Naive thymus-derived CD4-positive, alpha-beta T cell (primary cell): ENCODE measurements at regions of chr14 and their contacts with region 1.

Region 1: DNA sequence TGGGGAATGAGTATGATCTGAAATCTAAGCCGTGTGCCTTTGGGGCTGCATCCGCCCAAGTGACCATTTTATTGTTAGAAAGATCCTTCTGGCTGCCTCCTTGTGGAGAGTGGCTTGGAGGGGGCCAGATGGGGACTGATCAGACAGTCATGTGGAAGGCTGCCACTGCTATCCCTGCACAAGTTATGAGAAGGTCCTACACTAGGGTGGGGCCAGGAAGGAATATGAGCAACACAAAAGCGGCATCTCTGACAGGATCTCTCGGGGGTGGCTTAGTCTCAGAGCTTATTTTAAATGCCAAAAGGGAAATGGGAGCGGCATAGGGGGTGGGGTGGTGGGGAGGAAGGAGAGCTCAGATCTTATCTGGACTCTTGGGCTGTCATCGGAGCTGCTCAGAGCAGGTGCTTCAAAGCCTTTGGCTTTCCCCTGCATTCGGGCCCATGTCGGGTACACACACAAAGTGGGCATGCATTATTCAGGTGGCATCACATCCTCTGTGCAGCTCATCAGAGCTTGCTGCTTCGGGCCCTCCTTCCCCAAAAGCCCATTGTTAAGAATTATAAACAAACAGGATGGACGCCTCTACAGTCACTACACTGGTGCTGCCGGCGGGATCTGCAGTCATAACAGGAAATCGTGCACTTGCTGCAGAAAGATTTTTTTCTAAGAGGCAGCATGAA is 805.4 kb downstream of the VRK1 start:
- DNase-seq: peak; percentile 39 to 92 (median 89)
- ATAC-seq: peak; percentile 94
- H3K4me3 ChIP-seq: peak overlapping the region; percentile 37
- H3K4me3 Mint-ChIP-seq: no peak overlapping the region
- H3K27ac ChIP-seq: peak overlapping the region; percentile 80
- H3K27ac Mint-ChIP-seq: no peak overlapping the region
- H3K4me1 ChIP-seq: peaks cover 57 to 64% of the 10 kb centered on the region in 2 donors
- H3K4me1 Mint-ChIP-seq: peaks cover 0 to 31% (median 4%) of the 10 kb centered on the region in 7 donors
- H3K27me3 ChIP-seq: no peaks in the 10 kb centered on the region
- H3K27me3 Mint-ChIP-seq: no peaks in the 10 kb centered on the region

Region 2: GRCh38 chr14:96962337-96962736 is 640.2 kb before region 1 on chr14:
- CTCF ChIA-PET with region 1: no interaction called
- POLR2A ChIA-PET with region 1: no interaction called
- intact Hi-C with region 1: loop called in 1 of 2 experiments (anchors 2 kb)
- DNase-seq: peak in 7 of 9 donors; percentile 27 to 75 (median 59)
- ATAC-seq: peak; percentile 76
- H3K4me3 ChIP-seq: peak overlapping the region; percentile 14
- H3K4me3 Mint-ChIP-seq: peak overlapping the region; percentile 37 to 81 (median 76)
- H3K27ac ChIP-seq: peak overlapping the region; percentile 61
- H3K27ac Mint-ChIP-seq: peak overlapping the region; percentile 78 to 99 (median 94)
- H3K4me1 ChIP-seq: peaks cover 39 to 62% of the 10 kb centered on the region in 2 donors
- H3K4me1 Mint-ChIP-seq: peaks cover 17 to 76% (median 63%) of the 10 kb centered on the region in 7 donors
- H3K27me3 ChIP-seq: no peaks in the 10 kb centered on the region
- H3K27me3 Mint-ChIP-seq: no peaks in the 10 kb centered on the region

Region 3: GRCh38 chr14:97299661-97300060 is 302.9 kb before region 1 on chr14:
- CTCF ChIA-PET with region 1: no interaction called
- POLR2A ChIA-PET with region 1: no interaction called
- intact Hi-C with region 1: loop called in 1 of 2 experiments (anchors 1 kb)
- DNase-seq: peak in 5 of 9 donors; percentile 16 to 31 (median 22)
- ATAC-seq: peak; percentile 54
- H3K4me3 ChIP-seq: no peak overlapping the region
- H3K4me3 Mint-ChIP-seq: no peak overlapping the region
- H3K27ac ChIP-seq: no peak overlapping the region
- H3K27ac Mint-ChIP-seq: peak overlapping the region in 2 of 9 donors; percentile 28 to 48
- H3K4me1 ChIP-seq: peaks cover 0 to 4% of the 10 kb centered on the region in 2 donors
- H3K4me1 Mint-ChIP-seq: peaks cover 4 to 23% (median 12%) of the 10 kb centered on the region in 7 donors
- H3K27me3 ChIP-seq: no peaks in the 10 kb centered on the region
- H3K27me3 Mint-ChIP-seq: peaks cover 0 to 30% (median 0%) of the 10 kb centered on the region in 5 donors

Region 4: GRCh38 chr14:97620066-97620465 is 17.5 kb after region 1 on chr14:
- CTCF ChIA-PET with region 1: interaction called, 4 read pairs
- POLR2A ChIA-PET with region 1: interaction called, 62 read pairs
- intact Hi-C with region 1: loop called (anchors 1 kb)
- DNase-seq: peak in 1 of 9 donors; percentile 15
- ATAC-seq: no peak
- H3K4me3 ChIP-seq: peak overlapping the region; percentile 4
- H3K4me3 Mint-ChIP-seq: peak overlapping the region; percentile 72 to 95 (median 85)
- H3K27ac ChIP-seq: peak overlapping the region; percentile 76
- H3K27ac Mint-ChIP-seq: peak overlapping the region; percentile 95 to 100 (median 98)
- H3K4me1 ChIP-seq: peaks cover 37 to 38% of the 10 kb centered on the region in 2 donors
- H3K4me1 Mint-ChIP-seq: peaks cover 33 to 74% (median 58%) of the 10 kb centered on the region in 7 donors
- H3K27me3 ChIP-seq: no peaks in the 10 kb centered on the region
- H3K27me3 Mint-ChIP-seq: no peaks in the 10 kb centered on the region

Region 5: DNA sequence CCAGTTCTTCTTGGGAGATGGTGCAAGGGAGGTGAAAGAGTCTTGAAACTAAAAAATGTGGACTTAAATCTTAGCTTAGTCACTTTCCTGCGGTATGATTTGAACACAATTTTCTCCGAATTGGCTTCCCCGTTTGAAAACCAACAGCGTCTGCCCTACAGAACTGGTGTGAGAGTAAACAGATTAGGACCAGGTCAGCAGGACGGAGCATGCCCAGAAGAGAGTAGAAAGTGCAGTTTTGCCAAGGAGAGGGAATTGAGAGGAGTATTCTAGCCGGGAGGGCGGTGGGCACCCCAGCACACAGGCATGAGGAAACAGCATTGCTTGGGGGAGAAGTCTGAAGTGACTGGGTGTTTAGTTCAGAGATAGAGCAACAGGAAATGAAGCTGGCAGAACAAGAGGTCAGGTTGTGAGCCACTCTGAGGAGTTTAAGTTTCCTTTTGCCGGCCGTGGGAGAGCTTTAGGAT is 121.7 kb after region 1 on chr14:
- CTCF ChIA-PET with region 1: interaction called, 3 read pairs
- POLR2A ChIA-PET with region 1: interaction called, 14 read pairs
- intact Hi-C with region 1: loop called in 1 of 2 experiments (anchors 2 kb)
- DNase-seq: peak in 8 of 9 donors; percentile 38 to 67 (median 59)
- ATAC-seq: peak; percentile 77
- H3K4me3 ChIP-seq: peak overlapping the region; percentile 57
- H3K4me3 Mint-ChIP-seq: peak overlapping the region; percentile 78 to 92 (median 84)
- H3K27ac ChIP-seq: peak overlapping the region; percentile 80
- H3K27ac Mint-ChIP-seq: peak overlapping the region; percentile 92 to 99 (median 97)
- H3K4me1 ChIP-seq: peaks cover 28 to 72% of the 10 kb centered on the region in 2 donors
- H3K4me1 Mint-ChIP-seq: peaks cover 51 to 94% (median 86%) of the 10 kb centered on the region in 7 donors
- H3K27me3 ChIP-seq: no peaks in the 10 kb centered on the region
- H3K27me3 Mint-ChIP-seq: no peaks in the 10 kb centered on the region

Region 6: GRCh38 chr14:98433436-98433835 is 830.9 kb after region 1 on chr14:
- CTCF ChIA-PET with region 1: no interaction called
- POLR2A ChIA-PET with region 1: no interaction called
- intact Hi-C with region 1: no loop called
- DNase-seq: no peak
- ATAC-seq: no peak
- H3K4me3 ChIP-seq: no peak overlapping the region
- H3K4me3 Mint-ChIP-seq: peak overlapping the region in 6 of 10 donors; percentile 9 to 71 (median 59)
- H3K27ac ChIP-seq: no peak overlapping the region
- H3K27ac Mint-ChIP-seq: peak overlapping the region in 8 of 9 donors; percentile 20 to 79 (median 56)
- H3K4me1 ChIP-seq: no peaks in the 10 kb centered on the region
- H3K4me1 Mint-ChIP-seq: peaks cover 9 to 40% (median 26%) of the 10 kb centered on the region in 7 donors
- H3K27me3 ChIP-seq: no peaks in the 10 kb centered on the region
- H3K27me3 Mint-ChIP-seq: no peaks in the 10 kb centered on the region

Region 7: DNA sequence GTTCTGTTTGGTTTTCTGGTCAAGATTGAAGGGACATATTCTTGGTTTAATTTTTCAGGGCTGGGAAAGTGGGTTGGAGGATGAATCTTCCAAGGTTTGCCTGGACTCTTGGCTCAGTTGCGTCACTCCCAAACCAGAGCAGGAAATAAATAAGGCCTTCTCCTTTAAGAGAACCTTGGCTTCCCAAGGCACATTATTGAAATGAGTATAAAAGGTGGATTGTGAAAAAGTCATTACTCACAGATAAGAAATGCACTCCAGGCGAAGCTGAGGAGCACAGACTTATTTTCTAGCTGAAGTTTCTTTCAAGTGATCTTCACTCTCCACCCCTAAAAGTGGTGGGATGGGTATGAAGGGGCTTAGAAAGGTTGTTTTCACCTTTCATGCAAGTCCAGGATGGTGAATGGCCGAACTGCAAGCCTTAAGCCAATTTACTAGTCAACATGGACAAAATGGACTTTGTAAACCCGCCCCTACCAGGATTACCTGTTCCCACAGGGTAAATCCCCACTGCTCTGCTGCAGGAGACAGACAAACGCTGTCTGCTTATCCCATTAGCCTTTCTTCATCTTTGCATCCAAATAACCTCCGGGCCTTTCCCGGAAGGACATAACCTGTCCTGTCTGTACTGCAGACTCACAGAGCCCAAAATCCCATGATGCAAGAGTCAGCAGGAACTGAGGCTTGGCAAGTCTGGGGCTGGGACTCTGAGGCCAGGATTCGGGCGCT is 1461.8 kb after region 1 on chr14:
- CTCF ChIA-PET with region 1: no interaction called
- POLR2A ChIA-PET with region 1: no interaction called
- intact Hi-C with region 1: no loop called
- DNase-seq: no peak
- ATAC-seq: no peak
- H3K4me3 ChIP-seq: no peak overlapping the region
- H3K4me3 Mint-ChIP-seq: no peak overlapping the region
- H3K27ac ChIP-seq: no peak overlapping the region
- H3K27ac Mint-ChIP-seq: peak overlapping the region in 2 of 9 donors; percentile 54 to 60
- H3K4me1 ChIP-seq: no peaks in the 10 kb centered on the region
- H3K4me1 Mint-ChIP-seq: peaks cover 0 to 12% (median 0%) of the 10 kb centered on the region in 7 donors
- H3K27me3 ChIP-seq: no peaks in the 10 kb centered on the region
- H3K27me3 Mint-ChIP-seq: peaks cover 0 to 2% (median 0%) of the 10 kb centered on the region in 5 donors

Region 8: GRCh38 chr14:99192028-99192621 is 1589.5 kb after region 1 on chr14:
- CTCF ChIA-PET with region 1: no interaction called
- POLR2A ChIA-PET with region 1: interaction called, 4 read pairs
- intact Hi-C with region 1: loop called in 1 of 2 experiments (anchors 5 kb)
- DNase-seq: peak in 3 of 9 donors; percentile 45 to 64 (median 49)
- ATAC-seq: peak; percentile 28
- H3K4me3 ChIP-seq: peak overlapping the region; percentile 61
- H3K4me3 Mint-ChIP-seq: peak overlapping the region; percentile 85 to 94 (median 90)
- H3K27ac ChIP-seq: peak overlapping the region; percentile 85
- H3K27ac Mint-ChIP-seq: peak overlapping the region; percentile 93 to 100 (median 98)
- H3K4me1 ChIP-seq: peaks cover 84 to 85% of the 10 kb centered on the region in 2 donors
- H3K4me1 Mint-ChIP-seq: peaks cover 55 to 97% (median 93%) of the 10 kb centered on the region in 7 donors
- H3K27me3 ChIP-seq: no peaks in the 10 kb centered on the region
- H3K27me3 Mint-ChIP-seq: no peaks in the 10 kb centered on the region